ENCODE measurements at regions of chr1 and their contacts with region 1.

Region 1: DNA sequence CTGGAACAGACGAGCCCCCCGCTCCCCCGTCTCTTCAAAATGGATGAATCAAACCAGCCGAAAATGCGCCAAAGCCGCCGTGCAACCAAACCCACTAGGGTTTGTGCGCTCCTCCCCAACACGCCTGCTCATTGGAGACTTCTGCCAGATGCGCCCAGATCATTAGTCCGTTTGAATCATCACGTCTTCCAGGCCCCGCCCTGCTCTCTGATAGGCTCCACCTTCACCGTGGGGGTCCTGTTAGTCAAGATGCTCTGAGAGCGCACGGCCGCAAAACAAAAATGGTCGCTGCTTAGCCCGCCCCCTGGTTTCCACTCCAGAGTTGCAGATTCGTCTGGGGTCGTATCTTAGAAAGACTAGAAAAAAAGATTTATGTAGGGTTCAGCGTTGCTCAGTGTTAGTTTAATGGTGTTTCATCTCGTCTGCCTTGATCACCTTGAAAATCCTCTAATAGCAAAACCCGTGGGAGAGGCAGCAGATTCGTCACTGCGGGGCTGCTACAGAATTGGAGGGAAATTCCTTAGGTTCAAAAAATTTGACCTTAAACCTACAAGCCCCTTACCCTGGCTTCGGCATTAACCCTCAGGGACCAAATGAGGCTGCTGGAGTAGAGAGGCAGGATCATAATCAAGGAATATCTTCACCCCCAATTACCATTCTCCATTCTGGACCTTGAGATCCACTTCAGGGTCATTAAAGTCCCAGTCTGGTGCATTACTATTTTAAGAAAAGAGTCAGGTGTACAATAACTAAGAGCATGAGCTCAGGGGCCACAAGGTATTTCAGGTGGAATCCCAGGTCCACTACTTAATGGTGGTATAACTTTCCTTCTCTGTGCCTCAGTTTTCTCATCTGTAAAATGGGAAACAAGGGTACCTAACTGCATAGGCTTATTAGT is at the start of gene NUCKS1:
- DNase-seq: peak; percentile 93
- ATAC-seq: peak; percentile 87
- H3K4me3 ChIP-seq: peak within 1 kb of the TSS; percentile 90
- H3K27ac ChIP-seq: peak within 1 kb of the TSS; percentile 99
- H3K4me1 ChIP-seq: peaks cover 4% of the 10 kb centered on the region
- H3K27me3 ChIP-seq: no peaks in the 10 kb centered on the region
- CTCF ChIP-seq: no peak
- EP300 ChIP-seq: peak in 1 of 2 experiments; percentile 98; a peak in 2 of 4 replicates
- POLR2A ChIP-seq: no peak
- RAD21 ChIP-seq: no peak
- polyA plus RNA-seq, gene NUCKS1: 40.5 to 41.7 TPM

Region 2: DNA sequence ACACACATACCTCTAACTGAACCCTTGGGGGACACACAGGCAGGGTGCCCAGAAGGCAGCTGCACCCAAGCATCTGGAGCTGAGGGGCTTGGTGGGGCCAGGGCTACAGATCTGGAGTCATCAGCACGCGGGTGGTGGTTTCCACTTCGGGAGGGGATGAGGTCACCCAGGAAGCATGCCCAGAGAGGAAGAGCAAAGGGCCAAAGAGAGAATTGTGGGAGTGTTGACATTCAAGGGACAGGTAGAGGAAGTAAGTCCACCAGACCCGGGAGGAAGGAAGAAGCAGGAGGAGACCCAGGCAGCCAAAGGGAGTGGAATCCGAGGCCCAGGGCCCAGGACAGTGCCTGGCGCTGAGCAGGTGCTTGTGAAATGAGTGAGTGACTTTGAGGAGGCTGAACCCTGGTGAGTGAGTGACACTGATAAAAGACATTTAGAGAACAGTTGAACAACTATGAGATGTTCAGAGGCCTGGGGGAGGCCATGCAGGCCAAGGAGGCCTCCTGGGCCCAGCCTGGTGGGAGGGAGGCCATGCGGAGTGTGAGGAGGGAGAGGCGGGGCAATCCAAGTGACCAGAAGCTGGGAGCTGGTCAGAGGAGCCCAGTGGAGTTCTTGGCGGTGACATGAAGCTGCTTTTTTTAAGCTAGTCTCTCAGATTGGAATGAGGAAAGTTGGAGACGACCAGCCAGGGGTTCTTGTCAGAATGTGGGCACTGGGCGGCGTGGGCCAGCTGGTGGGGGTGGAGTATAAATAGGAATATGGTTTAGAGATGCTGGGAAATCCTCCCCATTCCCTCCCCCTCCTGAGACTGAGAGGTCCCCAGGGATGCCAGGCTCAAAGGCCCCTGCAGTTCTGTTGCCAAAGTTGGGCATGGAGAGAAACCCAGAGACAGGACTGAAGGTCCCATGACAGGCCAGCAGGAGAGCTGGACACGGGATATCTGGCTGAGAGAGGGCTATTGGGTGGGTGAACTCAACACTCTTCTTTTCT is 238.0 kb before region 1 on chr1:
- CTCF ChIA-PET with region 1: no interaction called
- POLR2A ChIA-PET with region 1: no interaction called
- RAD21 ChIA-PET with region 1: no interaction called
- SMC1A ChIA-PET with region 1: no interaction called
- in situ Hi-C with region 1: no loop called
- intact Hi-C with region 1: no loop called
- DNase-seq: no peak
- ATAC-seq: peak; percentile 13; the same call in 2 of the 3 replicates
- H3K4me3 ChIP-seq: no peak overlapping the region
- H3K27ac ChIP-seq: no peak overlapping the region
- H3K4me1 ChIP-seq: no peaks in the 10 kb centered on the region
- H3K27me3 ChIP-seq: no peaks in the 10 kb centered on the region; a peak in 1 of 4 replicates
- CTCF ChIP-seq: no peak
- EP300 ChIP-seq: no peak
- POLR2A ChIP-seq: no peak
- RAD21 ChIP-seq: no peak

Region 3: DNA sequence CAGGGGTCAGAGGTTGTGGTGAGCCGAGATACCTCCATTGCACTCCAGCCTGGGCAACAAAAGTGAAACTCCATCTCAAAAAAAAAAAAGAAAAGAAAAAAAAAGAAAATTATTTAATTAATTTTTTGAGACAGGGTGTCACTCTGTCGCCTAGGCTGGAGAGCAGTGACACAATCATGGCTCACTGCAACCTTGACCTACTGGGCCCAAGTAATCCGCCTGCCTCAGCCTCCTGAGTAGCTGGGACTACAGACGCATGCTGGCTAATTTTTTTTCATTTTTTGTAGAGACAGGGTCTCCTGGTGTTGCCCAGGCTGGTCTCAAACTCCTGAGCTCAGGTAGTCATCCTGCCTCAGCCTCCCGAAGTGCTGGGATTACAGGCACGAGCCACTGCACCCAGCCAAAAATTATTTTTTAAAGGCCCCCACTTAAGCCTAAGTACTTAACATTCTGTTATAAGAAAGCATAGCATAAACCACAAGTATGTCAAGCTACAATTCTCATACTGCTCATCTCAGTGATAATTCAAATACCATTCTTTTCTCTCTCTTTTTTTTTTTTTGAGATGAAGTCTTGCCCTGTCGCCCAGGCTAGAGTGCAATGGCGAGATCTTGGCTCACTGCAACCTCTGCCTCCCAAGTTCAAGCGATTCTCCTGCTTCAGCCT is 20.3 kb before region 1 on chr1:
- CTCF ChIA-PET with region 1: interaction called, 16 read pairs
- POLR2A ChIA-PET with region 1: interaction called, 7 read pairs
- RAD21 ChIA-PET with region 1: interaction called, 4 read pairs
- SMC1A ChIA-PET with region 1: interaction called, 4 read pairs
- in situ Hi-C with region 1: no loop called
- intact Hi-C with region 1: no loop called
- DNase-seq: no peak
- ATAC-seq: no peak
- H3K4me3 ChIP-seq: no peak overlapping the region
- H3K27ac ChIP-seq: no peak overlapping the region
- H3K4me1 ChIP-seq: no peaks in the 10 kb centered on the region
- H3K27me3 ChIP-seq: no peaks in the 10 kb centered on the region
- CTCF ChIP-seq: no peak
- EP300 ChIP-seq: no peak
- POLR2A ChIP-seq: no peak
- RAD21 ChIP-seq: no peak

Region 4: GRCh38 chr1:205739348-205740160 is 10.8 kb before region 1 on chr1:
- CTCF ChIA-PET with region 1: interaction called, 4 read pairs
- POLR2A ChIA-PET with region 1: interaction called, 12 read pairs
- RAD21 ChIA-PET with region 1: interaction called, 3 read pairs
- SMC1A ChIA-PET with region 1: interaction called, 10 read pairs
- in situ Hi-C with region 1: no loop called
- intact Hi-C with region 1: no loop called
- DNase-seq: no peak
- ATAC-seq: no peak
- H3K4me3 ChIP-seq: no peak overlapping the region
- H3K27ac ChIP-seq: no peak overlapping the region
- H3K4me1 ChIP-seq: peaks cover 5% of the 10 kb centered on the region
- H3K27me3 ChIP-seq: no peaks in the 10 kb centered on the region
- CTCF ChIP-seq: no peak
- EP300 ChIP-seq: no peak
- POLR2A ChIP-seq: no peak
- RAD21 ChIP-seq: no peak

Region 5: DNA sequence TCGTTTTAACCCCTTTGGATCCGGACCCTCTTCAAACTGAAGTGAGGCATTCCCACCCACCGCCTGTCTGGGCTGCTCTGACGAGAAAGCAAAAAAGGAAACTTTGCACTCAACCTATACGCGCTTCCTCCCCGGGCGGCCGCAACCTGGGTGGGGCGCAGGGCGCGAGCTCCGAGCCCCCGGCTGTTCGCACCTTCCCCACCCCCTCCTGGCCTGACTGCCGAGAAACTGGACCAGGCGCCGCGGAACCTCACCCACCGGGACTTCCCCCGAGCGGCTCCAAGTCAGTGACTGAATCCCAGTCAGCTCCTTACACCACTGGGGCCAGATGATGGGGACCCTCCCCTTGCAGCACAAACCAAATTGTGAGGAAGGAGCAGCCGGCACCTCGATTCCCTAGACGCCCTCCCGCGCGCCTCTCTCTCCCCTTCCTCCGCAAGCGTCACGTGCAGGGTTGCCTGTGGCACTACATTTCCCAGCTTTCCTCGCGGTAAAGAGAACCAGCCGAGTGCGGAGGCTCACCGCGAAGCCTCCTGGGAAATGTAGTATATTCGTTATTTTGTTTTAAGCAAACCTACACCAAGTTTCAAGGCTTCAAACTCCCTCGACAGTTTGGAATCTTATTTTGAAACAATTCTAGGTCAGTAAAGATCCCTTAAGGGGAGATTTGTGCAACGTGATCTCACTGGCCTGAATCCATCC is 24.8 kb after region 1 on chr1 and contains the start of gene RAB29:
- CTCF ChIA-PET with region 1: interaction called, 15 read pairs
- POLR2A ChIA-PET with region 1: interaction called, 21 read pairs
- RAD21 ChIA-PET with region 1: interaction called, 34 read pairs
- SMC1A ChIA-PET with region 1: interaction called, 30 read pairs
- in situ Hi-C with region 1: no loop called
- intact Hi-C with region 1: loop called (anchors 1 kb)
- DNase-seq: peak; percentile 57
- ATAC-seq: peak; percentile 83
- H3K4me3 ChIP-seq: peak within 1 kb of the TSS; percentile 88
- H3K27ac ChIP-seq: peak within 1 kb of the TSS; percentile 63
- H3K4me1 ChIP-seq: peaks cover 12% of the 10 kb centered on the region
- H3K27me3 ChIP-seq: no peaks in the 10 kb centered on the region
- CTCF ChIP-seq: no peak
- EP300 ChIP-seq: peak in 1 of 2 experiments; percentile 46; a peak in 1 of 4 replicates
- POLR2A ChIP-seq: peak; percentile 50; the same call in 1 of the 2 replicates
- RAD21 ChIP-seq: no peak
- polyA plus RNA-seq, gene RAB29: 12.6 to 16.2 TPM